ENCODE measurements at regions of chr18 and their contacts with region 1.

Region 1: GRCh38 chr18:79988451-79989194 is at the start of gene TXNL4A:
- DNase-seq: peak; percentile 74
- H3K4me3 Mint-ChIP-seq: peak within 1 kb of the TSS; percentile 73
- H3K27ac Mint-ChIP-seq: peak within 1 kb of the TSS; percentile 42
- H3K4me1 Mint-ChIP-seq: peaks cover 6% of the 10 kb centered on the region
- H3K27me3 Mint-ChIP-seq: no peaks in the 10 kb centered on the region
- CTCF ChIP-seq: no peak
- total RNA-seq, gene TXNL4A: 64.1 and 75.9 TPM in 2 replicates

Region 2: GRCh38 chr18:79823120-79823519 is 165.5 kb before region 1 on chr18:
- CTCF ChIA-PET with region 1: interaction called, 15 read pairs
- intact Hi-C with region 1: no loop called
- DNase-seq: no peak
- H3K4me3 Mint-ChIP-seq: no peak overlapping the region
- H3K27ac Mint-ChIP-seq: no peak overlapping the region
- H3K4me1 Mint-ChIP-seq: no peaks in the 10 kb centered on the region
- H3K27me3 Mint-ChIP-seq: peaks cover 13% of the 10 kb centered on the region
- CTCF ChIP-seq: no peak

Region 3: DNA sequence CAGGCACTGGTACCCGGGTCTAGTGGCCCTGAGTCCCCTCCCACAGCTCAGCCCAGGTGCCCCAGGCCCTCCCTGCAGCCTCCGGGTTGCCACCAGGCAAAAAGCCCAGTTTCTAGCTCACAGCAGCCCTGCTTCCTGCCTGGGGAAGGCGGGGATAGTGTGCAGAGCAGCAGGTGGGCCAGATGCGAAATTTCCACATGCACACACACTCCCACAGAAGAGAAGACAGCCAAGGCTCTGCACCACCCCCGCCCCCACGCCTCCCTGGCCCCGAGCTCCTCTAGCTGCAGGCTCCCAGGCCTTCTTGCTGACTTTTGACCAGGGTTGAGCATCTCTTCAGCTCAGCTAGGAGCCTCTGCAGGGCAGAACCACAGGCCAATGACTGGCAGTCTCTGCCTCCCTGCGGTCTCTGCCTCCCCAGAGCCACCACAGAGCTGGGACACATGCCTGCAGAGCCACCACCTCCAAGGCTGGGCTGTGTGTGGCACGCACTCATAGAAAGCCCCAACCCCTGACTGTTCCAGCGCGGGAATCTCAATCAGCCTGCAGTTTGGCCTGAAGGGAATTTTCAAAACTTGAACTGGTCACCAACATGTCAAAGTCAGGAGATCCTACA is 44.4 kb before region 1 on chr18:
- CTCF ChIA-PET with region 1: no interaction called
- intact Hi-C with region 1: no loop called
- DNase-seq: no peak
- H3K4me3 Mint-ChIP-seq: no peak overlapping the region
- H3K27ac Mint-ChIP-seq: no peak overlapping the region
- H3K4me1 Mint-ChIP-seq: no peaks in the 10 kb centered on the region
- H3K27me3 Mint-ChIP-seq: no peaks in the 10 kb centered on the region
- CTCF ChIP-seq: no peak

Region 4: DNA sequence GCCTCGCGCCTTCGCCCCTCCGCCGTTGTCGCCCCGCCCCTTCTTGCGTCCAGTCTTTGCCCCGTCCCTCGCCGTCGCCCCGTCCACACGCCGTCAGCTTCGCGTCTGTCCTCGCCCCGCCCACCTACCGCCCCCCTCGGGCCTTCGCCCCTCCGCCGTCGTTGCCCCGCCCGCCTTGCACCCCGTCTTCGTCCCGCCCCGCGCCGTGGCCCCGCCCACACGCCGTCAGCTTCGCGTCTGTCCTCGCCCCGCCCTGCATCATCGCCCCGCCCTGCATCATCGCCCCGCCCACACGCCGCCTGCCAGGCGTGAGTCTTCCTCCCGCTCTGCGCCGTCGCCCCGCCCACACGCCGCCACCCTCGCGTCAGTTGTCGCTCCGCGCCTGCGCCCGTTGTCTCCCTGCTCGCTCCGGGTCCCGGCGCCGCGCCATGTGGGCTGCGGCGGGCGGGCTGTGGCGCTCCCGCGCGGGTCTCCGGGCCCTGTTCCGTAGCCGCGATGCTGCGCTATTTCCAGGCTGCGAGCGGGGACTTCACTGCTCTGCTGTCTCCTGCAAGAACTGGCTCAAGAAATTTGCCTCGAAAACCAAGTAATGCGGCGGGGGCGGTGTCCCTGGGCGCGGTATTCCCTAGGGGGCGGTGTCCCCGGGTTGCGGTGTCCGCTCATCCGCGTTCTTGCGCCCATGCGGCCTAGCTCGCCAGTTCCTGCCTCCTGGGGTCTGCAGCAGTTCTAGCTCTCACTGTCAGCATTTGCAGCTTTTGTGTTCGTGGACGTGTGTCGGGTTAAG is 45.6 kb after region 1 on chr18 and contains the start of gene RBFA:
- CTCF ChIA-PET with region 1: no interaction called
- intact Hi-C with region 1: loop called (anchors 10 kb)
- DNase-seq: peak; percentile 97
- H3K4me3 Mint-ChIP-seq: peak within 1 kb of the TSS; percentile 96
- H3K27ac Mint-ChIP-seq: peak within 1 kb of the TSS; percentile 95
- H3K4me1 Mint-ChIP-seq: peaks cover 16% of the 10 kb centered on the region
- H3K27me3 Mint-ChIP-seq: no peaks in the 10 kb centered on the region
- CTCF ChIP-seq: peak; percentile 28
- total RNA-seq, gene RBFA: 20.5 TPM in 2 replicates

Region 5: GRCh38 chr18:80109676-80110078 is 121.1 kb after region 1 on chr18:
- CTCF ChIA-PET with region 1: no interaction called
- intact Hi-C with region 1: loop called (anchors 10 kb)
- DNase-seq: peak; percentile 11
- H3K4me3 Mint-ChIP-seq: peak overlapping the region; percentile 68
- H3K27ac Mint-ChIP-seq: no peak overlapping the region
- H3K4me1 Mint-ChIP-seq: peaks cover 23% of the 10 kb centered on the region
- H3K27me3 Mint-ChIP-seq: peaks cover 21% of the 10 kb centered on the region
- CTCF ChIP-seq: no peak

Measured in Calu3 (cell line).